ENCODE measurements at regions of chr19 and their contacts with region 1.

Region 1: DNA sequence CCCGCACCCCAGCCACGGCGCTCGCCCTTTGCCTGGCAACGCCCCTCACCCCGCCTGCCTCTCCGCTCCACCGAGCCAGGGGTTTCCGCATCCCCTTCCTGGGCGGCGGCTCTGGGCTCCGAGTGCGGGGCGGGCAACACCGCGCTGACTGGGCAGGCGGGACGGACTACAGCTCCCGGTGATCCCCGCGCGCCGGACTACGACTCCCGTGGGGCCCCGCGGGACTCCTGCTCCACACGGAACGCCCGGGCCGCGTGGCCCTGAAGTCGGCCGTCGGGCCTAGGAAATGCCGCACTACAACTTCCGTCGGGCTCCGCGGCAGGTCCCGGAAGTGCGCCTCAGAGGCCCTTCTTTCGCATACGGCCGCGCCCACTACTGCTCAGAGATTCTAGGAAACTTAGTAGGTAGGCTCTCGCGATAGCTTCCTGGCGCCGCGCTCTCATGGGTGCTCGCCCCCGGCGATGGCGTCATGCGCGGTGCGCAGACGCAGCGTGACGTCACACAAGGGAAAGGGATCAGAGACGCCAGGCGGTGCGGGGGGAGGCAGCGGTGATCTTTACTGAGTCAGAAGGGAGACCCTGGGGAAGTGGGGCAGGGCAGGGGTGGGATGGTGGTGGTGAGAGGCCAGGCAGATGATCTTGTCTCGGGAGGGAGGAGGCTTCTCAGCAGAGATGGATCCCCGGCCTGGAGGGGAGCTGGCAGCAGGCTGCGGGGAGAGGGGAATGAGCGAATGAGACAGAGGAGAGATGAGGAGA is at the start of gene JOSD2:
- DNase-seq: peak; percentile 98
- H3K4me3 Mint-ChIP-seq: peak within 1 kb of the TSS; percentile 87
- H3K27ac Mint-ChIP-seq: peak within 1 kb of the TSS; percentile 82
- H3K4me1 Mint-ChIP-seq: peaks cover 18% of the 10 kb centered on the region
- H3K27me3 Mint-ChIP-seq: peaks cover 5% of the 10 kb centered on the region
- total RNA-seq, gene JOSD2: 29.5 to 36.2 TPM

Region 2: GRCh38 chr19:49701271-49701786 is 809.9 kb before region 1 on chr19:
- CTCF ChIA-PET with region 1: no interaction called
- POLR2A ChIA-PET with region 1: no interaction called
- intact Hi-C with region 1: no loop called
- DNase-seq: no peak
- H3K4me3 Mint-ChIP-seq: no peak overlapping the region
- H3K27ac Mint-ChIP-seq: no peak overlapping the region
- H3K4me1 Mint-ChIP-seq: no peaks in the 10 kb centered on the region
- H3K27me3 Mint-ChIP-seq: peaks cover 4% of the 10 kb centered on the region

Region 3: GRCh38 chr19:50476224-50476942 is 34.9 kb before region 1 on chr19 and contains the starts of genes EMC10 and GARIN5A:
- CTCF ChIA-PET with region 1: no interaction called
- POLR2A ChIA-PET with region 1: interaction called, 4 read pairs
- intact Hi-C with region 1: loop called (anchors 1 kb)
- DNase-seq: peak; percentile 97
- H3K4me3 Mint-ChIP-seq: peak within 1 kb of the TSS; percentile 93
- H3K27ac Mint-ChIP-seq: peak within 1 kb of the TSS; percentile 88
- H3K4me1 Mint-ChIP-seq: peaks cover 22% of the 10 kb centered on the region
- H3K27me3 Mint-ChIP-seq: no peaks in the 10 kb centered on the region
- total RNA-seq, gene EMC10: 37.5 to 37.6 TPM
- total RNA-seq, gene GARIN5A: 0.77 to 0.88 TPM

Region 4: GRCh38 chr19:50639121-50640112 is 128.2 kb after region 1 on chr19 and contains the start of gene SYT3:
- CTCF ChIA-PET with region 1: no interaction called
- POLR2A ChIA-PET with region 1: no interaction called
- intact Hi-C with region 1: no loop called
- DNase-seq: peak; percentile 30
- H3K4me3 Mint-ChIP-seq: peak within 1 kb of the TSS; percentile 10
- H3K27ac Mint-ChIP-seq: no peak within 1 kb of the TSS
- H3K4me1 Mint-ChIP-seq: peaks cover 3% of the 10 kb centered on the region
- H3K27me3 Mint-ChIP-seq: peaks cover 49% of the 10 kb centered on the region
- total RNA-seq, gene SYT3: not detected

Region 5: GRCh38 chr19:50657712-50658440 is 146.6 kb after region 1 on chr19:
- CTCF ChIA-PET with region 1: no interaction called
- POLR2A ChIA-PET with region 1: no interaction called
- intact Hi-C with region 1: loop called (anchors 2 kb)
- DNase-seq: peak; percentile 94
- H3K4me3 Mint-ChIP-seq: peak overlapping the region; percentile 74
- H3K27ac Mint-ChIP-seq: peak overlapping the region; percentile 66
- H3K4me1 Mint-ChIP-seq: peaks cover 17% of the 10 kb centered on the region
- H3K27me3 Mint-ChIP-seq: peaks cover 65% of the 10 kb centered on the region

Region 6: DNA sequence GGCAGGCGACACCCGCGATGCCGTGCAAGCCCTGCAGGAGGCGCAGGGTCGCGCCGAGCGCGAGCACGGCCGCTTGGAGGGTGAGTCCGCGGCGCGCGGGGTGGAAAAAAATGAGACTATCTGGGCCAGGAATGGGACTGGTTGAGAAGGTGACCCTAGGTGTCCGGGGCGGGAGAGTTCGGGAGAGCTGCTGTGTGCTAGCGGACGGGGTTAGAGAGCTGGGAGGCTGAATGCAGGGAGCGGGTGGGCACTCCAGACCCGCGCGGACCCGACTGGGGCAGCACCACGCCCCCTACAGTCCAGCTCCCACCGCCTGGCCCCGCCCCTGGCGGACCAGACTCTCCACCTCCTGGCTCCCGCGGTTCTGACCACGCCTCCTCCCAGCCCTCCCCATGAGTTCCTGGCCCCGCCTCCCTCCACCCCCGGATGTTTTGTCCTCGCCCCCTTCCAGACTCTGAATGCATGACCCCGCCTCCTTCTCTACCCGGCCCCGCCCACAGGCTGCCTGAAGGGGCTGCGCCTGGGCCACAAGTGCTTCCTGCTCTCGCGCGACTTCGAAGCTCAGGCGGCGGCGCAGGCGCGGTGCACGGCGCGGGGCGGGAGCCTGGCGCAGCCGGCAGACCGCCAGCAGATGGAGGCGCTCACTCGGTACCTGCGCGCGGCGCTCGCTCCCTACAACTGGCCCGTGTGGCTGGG is 213.4 kb after region 1 on chr19:
- CTCF ChIA-PET with region 1: no interaction called
- POLR2A ChIA-PET with region 1: no interaction called
- intact Hi-C with region 1: loop called (anchors 1 kb)
- DNase-seq: peak; percentile 97
- H3K4me3 Mint-ChIP-seq: peak overlapping the region; percentile 62
- H3K27ac Mint-ChIP-seq: no peak overlapping the region
- H3K4me1 Mint-ChIP-seq: peaks cover 22% of the 10 kb centered on the region
- H3K27me3 Mint-ChIP-seq: peaks cover 65% of the 10 kb centered on the region

Region 7: GRCh38 chr19:51108066-51108804 is 597.0 kb after region 1 on chr19 and contains the start of gene CTU1:
- CTCF ChIA-PET with region 1: no interaction called
- POLR2A ChIA-PET with region 1: no interaction called
- intact Hi-C with region 1: loop called (anchors 2 kb)
- DNase-seq: peak; percentile 99
- H3K4me3 Mint-ChIP-seq: peak within 1 kb of the TSS; percentile 93
- H3K27ac Mint-ChIP-seq: peak within 1 kb of the TSS; percentile 81
- H3K4me1 Mint-ChIP-seq: peaks cover 35% of the 10 kb centered on the region
- H3K27me3 Mint-ChIP-seq: no peaks in the 10 kb centered on the region
- total RNA-seq, gene CTU1: 8.8 to 9.8 TPM

Measured in activated CD4-positive, alpha-beta memory T cell treated with anti-CD3 and anti-CD28 coated beads for 36 hours (primary cell).